T-cell (primary cell): ENCODE measurements at regions of chr16 and their contacts with region 1.

Region 1: DNA sequence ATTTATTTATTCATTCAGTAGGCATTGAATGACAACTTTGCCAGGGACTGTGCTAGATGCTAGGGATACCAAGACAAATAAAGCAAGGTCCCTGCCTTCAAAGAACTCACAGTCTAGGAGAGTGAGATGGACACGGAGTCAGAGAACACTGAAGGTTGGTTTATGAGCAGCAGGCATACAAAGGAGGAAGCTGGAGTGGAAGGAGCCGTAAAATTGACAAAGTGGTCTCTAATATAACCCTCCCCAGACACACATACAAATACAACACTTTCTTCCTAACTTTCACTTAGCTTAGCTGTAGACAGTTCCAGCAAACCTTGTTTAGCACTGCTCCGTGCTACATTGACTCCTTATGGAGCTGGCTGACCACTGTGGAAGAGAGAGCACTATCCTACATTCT is 229.7 kb downstream of the IRX3 start:
- DNase-seq: no peak
- ATAC-seq: no peak
- H3K4me3 ChIP-seq: no peak overlapping the region
- H3K4me3 Mint-ChIP-seq: no peak overlapping the region
- H3K27ac ChIP-seq: no peak overlapping the region
- H3K27ac Mint-ChIP-seq: no peak overlapping the region
- H3K4me1 ChIP-seq: no peaks in the 10 kb centered on the region
- H3K4me1 Mint-ChIP-seq: no peaks in the 10 kb centered on the region
- H3K27me3 ChIP-seq: no peaks in the 10 kb centered on the region
- H3K27me3 Mint-ChIP-seq: no peaks in the 10 kb centered on the region

Region 2: GRCh38 chr16:53614346-53614745 is 442.6 kb before region 1 on chr16:
- CTCF ChIA-PET with region 1: no interaction called
- POLR2A ChIA-PET with region 1: interaction called in 1 of 2 experiments, 11 read pairs
- DNase-seq: no peak
- ATAC-seq: no peak
- H3K4me3 ChIP-seq: no peak overlapping the region
- H3K4me3 Mint-ChIP-seq: no peak overlapping the region
- H3K27ac ChIP-seq: no peak overlapping the region
- H3K27ac Mint-ChIP-seq: no peak overlapping the region
- H3K4me1 ChIP-seq: no peaks in the 10 kb centered on the region
- H3K4me1 Mint-ChIP-seq: no peaks in the 10 kb centered on the region
- H3K27me3 ChIP-seq: no peaks in the 10 kb centered on the region
- H3K27me3 Mint-ChIP-seq: no peaks in the 10 kb centered on the region